ENCODE measurements at regions of chr9 and their contacts with region 1.

Region 1: DNA sequence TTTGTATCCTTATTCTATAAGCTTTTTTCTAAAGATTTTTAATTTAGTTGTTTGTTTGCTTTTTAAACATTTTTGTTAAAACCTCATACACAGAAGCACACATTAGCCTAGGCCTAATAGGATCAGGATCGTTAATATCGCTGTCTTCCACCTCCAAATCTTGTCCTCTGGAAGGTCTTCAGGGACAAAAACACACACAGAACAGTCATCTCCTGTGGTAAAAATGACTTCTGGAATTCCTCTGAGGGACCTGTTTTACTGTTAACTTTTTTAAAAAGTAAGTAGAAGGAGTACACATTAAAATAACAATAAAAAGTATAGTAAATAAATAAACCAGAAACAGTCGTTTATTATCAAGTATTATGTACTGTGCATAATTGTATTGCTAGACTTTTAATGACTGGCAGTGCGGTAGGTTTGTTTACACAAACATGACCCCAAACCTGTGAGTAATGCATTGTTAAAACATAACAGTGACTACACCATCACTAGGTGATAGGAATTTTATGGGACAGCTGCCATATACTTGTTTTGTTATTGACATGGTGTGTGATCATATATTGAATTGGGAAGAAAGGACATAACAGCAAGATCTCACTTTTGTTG is 109.6 kb downstream of the ZCCHC7 start:
- DNase-seq: no peak
- H3K4me3 Mint-ChIP-seq: no peak overlapping the region
- H3K27ac Mint-ChIP-seq: no peak overlapping the region
- H3K4me1 Mint-ChIP-seq: peaks cover 17% of the 10 kb centered on the region
- H3K27me3 Mint-ChIP-seq: no peaks in the 10 kb centered on the region

Region 2: GRCh38 chr9:37248651-37249163 is 18.7 kb after region 1 on chr9:
- CTCF ChIA-PET with region 1: no interaction called
- intact Hi-C with region 1: loop called (anchors 1 kb)
- DNase-seq: no peak
- H3K4me3 Mint-ChIP-seq: no peak overlapping the region
- H3K27ac Mint-ChIP-seq: no peak overlapping the region
- H3K4me1 Mint-ChIP-seq: peaks cover 3% of the 10 kb centered on the region
- H3K27me3 Mint-ChIP-seq: no peaks in the 10 kb centered on the region